MCF 10A (cell line): ENCODE measurements at regions of chr2 and their contacts with region 1.

Region 1: DNA sequence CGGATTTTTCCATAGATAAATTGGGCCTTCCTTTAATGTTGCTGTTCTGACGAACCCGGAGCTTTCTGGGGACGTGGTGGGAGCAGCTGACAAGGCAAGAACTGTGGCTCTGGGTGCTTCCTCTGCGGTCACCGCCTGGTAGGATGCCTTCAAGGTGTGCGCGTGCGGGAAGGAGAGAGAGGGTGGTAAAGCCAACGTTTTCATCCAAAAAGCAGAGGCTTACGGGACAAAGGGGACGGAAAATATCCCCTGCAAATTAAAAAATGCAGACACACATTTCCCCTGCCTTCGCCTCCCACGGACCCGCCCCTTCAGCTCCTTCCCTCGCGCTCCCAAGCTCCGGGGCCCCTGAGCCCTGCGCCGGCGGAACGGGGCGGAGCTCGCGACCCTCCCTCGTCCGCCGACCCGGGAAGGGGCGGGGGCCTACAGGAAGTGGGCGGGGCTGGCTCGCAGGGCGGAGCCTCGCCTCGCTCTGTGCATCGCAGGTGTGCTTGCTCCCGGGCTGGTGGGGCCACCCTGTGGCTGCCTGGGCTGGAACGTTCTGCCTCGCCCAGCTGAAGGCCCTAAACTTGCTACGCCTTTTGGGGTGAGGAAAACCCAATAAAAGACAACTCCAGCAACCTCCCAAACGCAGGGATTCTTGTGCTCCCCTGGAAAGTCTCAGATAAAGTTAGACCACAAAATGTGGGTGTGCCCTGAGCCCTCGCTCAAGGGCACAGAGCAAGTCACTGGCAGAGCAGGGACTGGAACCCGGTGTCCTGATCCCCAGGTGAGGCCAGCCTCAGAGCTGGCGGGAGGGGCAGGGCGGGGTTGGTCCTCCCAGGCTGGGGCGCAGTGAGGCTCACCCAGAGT is 25.4 kb upstream of the SLC66A3 start:
- DNase-seq: peak; percentile 34
- H3K4me3 Mint-ChIP-seq: peak overlapping the region; percentile 21
- H3K27ac Mint-ChIP-seq: no peak overlapping the region
- H3K4me1 Mint-ChIP-seq: peaks cover 7% of the 10 kb centered on the region
- H3K27me3 Mint-ChIP-seq: peaks cover 11% of the 10 kb centered on the region
- CTCF ChIP-seq: no peak

Region 2: GRCh38 chr2:10832203-10832936 is 297.5 kb before region 1 on chr2:
- CTCF ChIA-PET with region 1: interaction called, 189 read pairs
- POLR2A ChIA-PET with region 1: no interaction called
- intact Hi-C with region 1: no loop called
- DNase-seq: peak; percentile 76
- H3K4me3 Mint-ChIP-seq: no peak overlapping the region
- H3K27ac Mint-ChIP-seq: no peak overlapping the region
- H3K4me1 Mint-ChIP-seq: no peaks in the 10 kb centered on the region
- H3K27me3 Mint-ChIP-seq: peaks cover 45% of the 10 kb centered on the region
- CTCF ChIP-seq: peak; percentile 97

Region 3: GRCh38 chr2:11142345-11142744 is 12.5 kb after region 1 on chr2:
- CTCF ChIA-PET with region 1: interaction called, 49 read pairs
- POLR2A ChIA-PET with region 1: no interaction called
- intact Hi-C with region 1: no loop called
- DNase-seq: no peak
- H3K4me3 Mint-ChIP-seq: no peak overlapping the region
- H3K27ac Mint-ChIP-seq: no peak overlapping the region
- H3K4me1 Mint-ChIP-seq: no peaks in the 10 kb centered on the region
- H3K27me3 Mint-ChIP-seq: peaks cover 55% of the 10 kb centered on the region
- CTCF ChIP-seq: no peak

Region 4: DNA sequence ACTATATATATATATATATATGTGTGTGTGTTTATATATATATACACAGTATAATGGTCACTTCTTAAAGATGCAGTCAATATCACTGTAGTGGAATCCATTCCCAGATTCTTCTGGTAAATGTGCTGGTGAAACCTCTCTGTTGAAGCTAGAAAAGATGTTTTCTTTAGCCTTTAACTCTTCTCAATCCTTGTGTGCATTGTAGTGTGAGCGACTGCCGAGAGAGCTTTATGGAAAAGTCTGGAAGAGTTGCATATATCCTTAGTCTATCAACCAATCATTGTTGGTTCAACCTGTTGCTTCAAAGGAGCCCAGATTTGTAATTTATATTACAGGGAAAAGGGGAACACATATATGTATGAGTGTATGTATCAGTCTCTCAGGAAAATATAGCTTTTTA is 53.1 kb after region 1 on chr2:
- CTCF ChIA-PET with region 1: interaction called, 22 read pairs
- POLR2A ChIA-PET with region 1: interaction called, 3 read pairs
- intact Hi-C with region 1: no loop called
- DNase-seq: no peak
- H3K4me3 Mint-ChIP-seq: no peak overlapping the region
- H3K27ac Mint-ChIP-seq: no peak overlapping the region
- H3K4me1 Mint-ChIP-seq: no peaks in the 10 kb centered on the region
- H3K27me3 Mint-ChIP-seq: no peaks in the 10 kb centered on the region
- CTCF ChIP-seq: no peak

Region 5: DNA sequence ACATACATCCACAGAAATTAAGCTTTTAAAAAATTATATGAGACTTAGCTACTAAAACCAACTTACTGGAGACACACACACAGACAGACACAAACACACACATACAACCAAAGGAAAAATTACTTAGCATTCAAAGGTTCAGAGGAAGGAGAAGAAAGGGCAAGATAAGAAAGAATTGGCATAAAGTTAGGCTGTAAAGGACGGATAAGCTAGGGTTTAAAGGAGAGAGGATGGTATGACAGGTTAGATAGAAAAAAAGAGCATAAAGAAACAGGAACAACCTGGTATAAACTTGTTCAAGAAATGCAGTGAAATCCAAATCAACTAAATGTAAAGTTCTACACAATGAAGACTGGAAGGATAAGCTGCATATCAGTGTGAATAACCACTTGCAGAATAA is 98.9 kb after region 1 on chr2:
- CTCF ChIA-PET with region 1: interaction called, 14 read pairs
- POLR2A ChIA-PET with region 1: no interaction called
- intact Hi-C with region 1: no loop called
- DNase-seq: no peak
- H3K4me3 Mint-ChIP-seq: no peak overlapping the region
- H3K27ac Mint-ChIP-seq: no peak overlapping the region
- H3K4me1 Mint-ChIP-seq: no peaks in the 10 kb centered on the region
- H3K27me3 Mint-ChIP-seq: no peaks in the 10 kb centered on the region
- CTCF ChIP-seq: no peak

Region 6: GRCh38 chr2:11344342-11344955 is 214.6 kb after region 1 on chr2 and contains the start of gene ROCK2:
- CTCF ChIA-PET with region 1: no interaction called
- POLR2A ChIA-PET with region 1: no interaction called
- intact Hi-C with region 1: loop called (anchors 2 kb)
- DNase-seq: peak; percentile 82
- H3K4me3 Mint-ChIP-seq: peak within 1 kb of the TSS; percentile 91
- H3K27ac Mint-ChIP-seq: peak within 1 kb of the TSS; percentile 97
- H3K4me1 Mint-ChIP-seq: peaks cover 7% of the 10 kb centered on the region
- H3K27me3 Mint-ChIP-seq: no peaks in the 10 kb centered on the region
- CTCF ChIP-seq: no peak
- total RNA-seq, gene ROCK2: 40.0 and 40.7 TPM in 2 replicates

Region 7: DNA sequence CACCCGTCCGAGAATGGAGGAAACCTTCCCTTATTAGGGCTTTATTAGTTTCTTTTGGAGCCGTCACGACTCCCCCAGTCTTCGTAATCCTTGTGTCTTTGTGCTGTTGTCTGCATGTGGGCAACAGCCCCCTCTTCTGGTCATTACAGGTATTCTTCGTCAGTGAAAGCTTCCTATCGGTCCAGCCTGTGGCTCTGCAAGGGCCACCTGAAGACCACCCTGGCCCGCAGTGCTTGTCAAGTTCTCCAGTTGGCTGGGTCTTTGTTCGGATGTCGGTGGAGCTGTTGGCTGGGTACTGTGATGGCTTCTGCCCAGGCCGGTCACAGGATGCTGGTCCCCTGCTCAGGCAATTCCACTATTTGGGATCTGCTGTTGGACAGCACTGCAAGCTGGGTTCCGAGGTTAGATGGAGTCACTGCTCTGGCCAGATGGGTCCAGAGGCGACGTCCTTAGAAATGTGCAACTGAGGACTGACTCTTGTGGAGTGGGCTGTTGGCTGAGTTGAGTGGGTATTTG is 317.0 kb after region 1 on chr2:
- CTCF ChIA-PET with region 1: interaction called, 14 read pairs
- POLR2A ChIA-PET with region 1: no interaction called
- intact Hi-C with region 1: loop called (anchors 1 kb)
- DNase-seq: peak; percentile 72
- H3K4me3 Mint-ChIP-seq: no peak overlapping the region
- H3K27ac Mint-ChIP-seq: no peak overlapping the region
- H3K4me1 Mint-ChIP-seq: no peaks in the 10 kb centered on the region
- H3K27me3 Mint-ChIP-seq: no peaks in the 10 kb centered on the region
- CTCF ChIP-seq: peak; percentile 88